ENCODE measurements at regions of chr4 and their contacts with region 1.

Region 1: GRCh38 chr4:173420324-173420752 is 21.4 kb upstream of the SCRG1 start:
- DNase-seq: no peak
- ATAC-seq: peak; percentile 56

Region 2: GRCh38 chr4:173181769-173182354 is 238.5 kb before region 1 on chr4:
- intact Hi-C with region 1: no loop called
- DNase-seq: no peak
- ATAC-seq: no peak

Region 3: GRCh38 chr4:173318648-173319211 is 101.6 kb before region 1 on chr4:
- intact Hi-C with region 1: loop called (anchors 2 to 5 kb)
- DNase-seq: no peak
- ATAC-seq: no peak

Region 4: DNA sequence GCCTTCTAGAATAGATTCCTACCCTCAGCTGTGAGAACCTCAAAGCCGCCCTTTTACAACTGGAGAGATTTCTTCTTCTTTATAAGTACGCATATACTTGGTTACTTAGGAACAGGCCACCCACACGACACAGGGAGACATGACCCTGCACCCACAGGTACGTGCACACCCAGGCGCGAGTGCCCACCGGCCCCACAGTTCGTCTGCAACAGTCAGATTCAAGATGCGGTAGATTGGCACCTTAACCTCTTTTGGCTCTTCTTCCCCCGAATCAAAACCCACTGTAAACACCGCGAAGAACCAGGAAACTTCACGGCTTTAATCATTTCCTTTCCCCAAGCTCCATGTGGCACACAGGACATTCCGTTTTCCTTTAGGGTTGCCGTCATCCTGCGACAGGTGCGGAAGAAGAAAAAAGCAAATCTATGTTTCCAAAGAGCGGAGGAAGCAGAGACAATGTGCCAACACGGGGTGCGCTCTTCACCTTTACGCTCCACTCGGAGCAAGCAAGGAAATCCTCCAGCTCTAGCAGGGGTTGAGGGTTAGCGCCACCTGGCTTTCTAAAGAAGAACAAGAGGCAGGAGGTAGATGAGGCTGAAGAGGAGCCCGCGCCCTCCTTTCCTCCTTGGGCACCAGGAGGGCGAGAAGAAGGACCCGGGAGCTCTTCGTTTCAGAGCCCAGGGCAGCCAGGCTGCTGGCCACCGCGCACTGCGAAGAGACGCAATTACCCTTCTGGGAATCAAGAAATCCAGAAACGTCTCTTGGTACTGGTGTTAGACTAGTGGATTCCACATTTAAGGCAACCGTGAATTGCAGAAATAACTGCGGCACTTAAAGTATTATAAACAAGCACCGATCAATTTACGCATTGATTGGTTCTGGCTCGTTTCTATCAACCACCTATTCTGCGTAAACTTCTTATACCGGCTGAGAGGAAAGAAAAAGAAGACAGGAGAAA is 74.0 kb after region 1 on chr4:
- intact Hi-C with region 1: loop called in 1 of 2 experiments (anchors 5 kb)
- DNase-seq: peak; percentile 59 to 70
- ATAC-seq: peak; percentile 99

Region 5: GRCh38 chr4:174036111-174036510 is 615.8 kb after region 1 on chr4:
- intact Hi-C with region 1: no loop called
- DNase-seq: no peak
- ATAC-seq: no peak